ENCODE measurements at regions of chr10 and their contacts with region 1.

Region 1: GRCh38 chr10:69092959-69093850 is 5.3 kb downstream of the SRGN start:
- DNase-seq: peak in 2 of 3 donors; percentile 77 to 80
- H3K4me3 ChIP-seq: peak overlapping the region; percentile 12 to 99 (median 97)
- H3K4me3 Mint-ChIP-seq: peak overlapping the region; percentile 80 to 99
- H3K27ac ChIP-seq: peak overlapping the region; percentile 66 to 78
- H3K27ac Mint-ChIP-seq: peak overlapping the region; percentile 90 to 100 (median 98)
- H3K4me1 ChIP-seq: peaks cover 72 to 75% of the 10 kb centered on the region in 2 donors
- H3K4me1 Mint-ChIP-seq: peaks cover 48% of the 10 kb centered on the region
- H3K27me3 ChIP-seq: no peaks in the 10 kb centered on the region
- H3K27me3 Mint-ChIP-seq: peaks cover 0 to 2% (median 2%) of the 10 kb centered on the region in 3 donors
- CTCF ChIP-seq: peak; percentile 80

Region 2: DNA sequence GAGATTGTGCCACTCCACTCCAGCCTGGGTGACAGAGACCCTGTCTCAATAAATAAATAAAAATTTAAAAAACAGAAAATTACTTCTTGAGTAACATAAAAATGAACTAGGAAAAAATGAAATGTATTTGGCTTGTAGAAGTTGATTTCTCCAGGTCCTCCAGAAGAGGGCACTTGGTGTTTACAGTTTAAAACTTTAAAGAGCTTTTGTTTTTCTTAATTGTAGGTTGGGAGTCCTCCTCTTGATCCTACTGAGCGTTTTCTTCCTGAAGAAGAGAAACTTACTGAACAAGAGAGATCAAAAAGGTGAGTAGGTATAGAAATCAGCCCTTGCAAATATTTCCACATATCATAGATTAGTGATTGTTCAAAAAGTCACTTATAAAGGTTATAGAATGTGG is 88.4 kb before region 1 on chr10:
- intact Hi-C with region 1: loop called in 1 of 2 experiments (anchors 5 kb)
- DNase-seq: peak; percentile 41 to 75 (median 63)
- H3K4me3 ChIP-seq: no peak overlapping the region
- H3K4me3 Mint-ChIP-seq: no peak overlapping the region
- H3K27ac ChIP-seq: peak overlapping the region in 1 of 2 donors; percentile 51
- H3K27ac Mint-ChIP-seq: peak overlapping the region in 4 of 7 donors; percentile 30 to 77 (median 64)
- H3K4me1 ChIP-seq: peaks cover 0 to 4% of the 10 kb centered on the region in 2 donors
- H3K4me1 Mint-ChIP-seq: peaks cover 19% of the 10 kb centered on the region
- H3K27me3 ChIP-seq: no peaks in the 10 kb centered on the region
- H3K27me3 Mint-ChIP-seq: no peaks in the 10 kb centered on the region
- CTCF ChIP-seq: peak; percentile 75